ENCODE measurements at regions of chr3 and their contacts with region 1.

Region 1: GRCh38 chr3:106130384-106131198 is 261.8 kb upstream of the CBLB start:
- DNase-seq: no peak
- H3K4me3 ChIP-seq: no peak overlapping the region
- H3K27ac ChIP-seq: no peak overlapping the region
- H3K4me1 ChIP-seq: no peaks in the 10 kb centered on the region
- H3K27me3 ChIP-seq: no peaks in the 10 kb centered on the region
- CTCF ChIP-seq: no peak
- POLR2A ChIP-seq: no peak

Region 2: DNA sequence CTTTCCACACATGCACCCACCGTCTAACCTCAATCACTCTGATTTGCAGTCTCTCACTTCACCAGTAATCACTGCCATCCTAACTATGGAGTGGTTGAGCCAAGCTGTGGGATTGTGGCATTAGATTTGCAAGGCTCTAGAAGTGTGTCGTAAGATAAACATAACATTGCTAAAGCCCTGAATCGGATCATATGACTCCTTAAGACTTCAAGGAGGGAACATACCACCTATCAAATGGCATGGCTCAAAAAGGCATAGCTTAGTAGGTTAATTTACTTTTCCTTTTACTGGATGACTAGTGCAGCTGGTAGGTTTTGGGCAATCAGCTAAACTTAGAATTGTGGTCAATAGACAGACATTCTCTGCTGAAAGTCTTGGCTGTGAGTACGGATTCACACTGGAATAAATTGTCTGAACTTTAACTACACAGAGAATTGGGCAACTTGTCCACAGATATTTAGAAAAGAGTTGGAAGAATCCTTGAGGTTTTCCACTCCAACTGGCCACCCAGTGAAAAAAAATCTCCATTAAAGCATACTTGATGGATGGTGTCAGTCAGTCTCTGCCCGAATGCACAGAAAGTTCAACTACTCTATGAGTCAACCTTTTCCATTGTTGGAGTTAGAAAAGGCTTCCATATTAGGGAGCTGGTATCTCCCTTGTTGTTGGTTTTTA is 214.9 kb after region 1 on chr3:
- intact Hi-C with region 1: loop called (anchors 10 kb)
- DNase-seq: peak; percentile 17
- H3K4me3 ChIP-seq: no peak overlapping the region
- H3K27ac ChIP-seq: no peak overlapping the region
- H3K4me1 ChIP-seq: no peaks in the 10 kb centered on the region
- H3K27me3 ChIP-seq: no peaks in the 10 kb centered on the region
- CTCF ChIP-seq: no peak
- POLR2A ChIP-seq: no peak

Measured in prostate gland (tissue), 2 donors.